CD8-positive, alpha-beta T cell (primary cell): ENCODE measurements at regions of chr6 and their contacts with region 1.

Region 1: DNA sequence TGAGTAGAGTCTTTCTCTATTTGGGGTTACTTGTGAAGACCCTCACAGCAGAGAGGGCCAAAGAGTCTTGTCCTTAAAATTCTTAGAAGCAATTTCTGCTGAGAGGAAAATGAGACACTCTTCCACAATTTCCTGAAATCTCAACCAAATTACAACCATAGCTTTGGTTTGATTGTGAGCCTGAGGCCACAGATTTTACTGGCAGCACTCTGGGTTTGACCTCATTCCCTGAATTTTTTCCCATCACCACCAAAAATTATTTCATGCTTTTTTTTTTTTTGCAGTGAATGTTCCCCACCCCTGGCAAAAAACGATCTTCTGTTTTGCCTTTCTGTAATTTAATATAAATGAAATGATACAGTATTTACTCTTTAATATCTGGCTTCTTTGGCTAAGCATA is 125.5 kb downstream of the THEMIS start:
- DNase-seq: no peak
- ATAC-seq: no peak
- H3K4me3 ChIP-seq: no peak overlapping the region
- H3K4me3 Mint-ChIP-seq: no peak overlapping the region
- H3K27ac ChIP-seq: no peak overlapping the region
- H3K27ac Mint-ChIP-seq: peak overlapping the region; percentile 76
- H3K4me1 ChIP-seq: peaks cover 10% of the 10 kb centered on the region
- H3K4me1 Mint-ChIP-seq: peaks cover 72% of the 10 kb centered on the region
- H3K27me3 ChIP-seq: no peaks in the 10 kb centered on the region
- H3K27me3 Mint-ChIP-seq: no peaks in the 10 kb centered on the region
- CTCF ChIP-seq: no peak

Region 2: GRCh38 chr6:127762284-127762683 is 13.1 kb before region 1 on chr6:
- CTCF ChIA-PET with region 1: interaction called, 4 read pairs
- POLR2A ChIA-PET with region 1: no interaction called
- intact Hi-C with region 1: loop called in 1 of 2 experiments (anchors 2 kb)
- DNase-seq: peak in 3 of 9 experiments; percentile 15 to 38 (median 18)
- ATAC-seq: peak; percentile 38
- H3K4me3 ChIP-seq: no peak overlapping the region
- H3K4me3 Mint-ChIP-seq: no peak overlapping the region
- H3K27ac ChIP-seq: peak overlapping the region in 1 of 2 experiments; percentile 10
- H3K27ac Mint-ChIP-seq: peak overlapping the region; percentile 75
- H3K4me1 ChIP-seq: peaks cover 38% of the 10 kb centered on the region
- H3K4me1 Mint-ChIP-seq: peaks cover 62% of the 10 kb centered on the region
- H3K27me3 ChIP-seq: no peaks in the 10 kb centered on the region
- H3K27me3 Mint-ChIP-seq: no peaks in the 10 kb centered on the region
- CTCF ChIP-seq: no peak

Region 3: GRCh38 chr6:127792616-127793015 is 17.2 kb after region 1 on chr6:
- CTCF ChIA-PET with region 1: interaction called, 4 read pairs
- POLR2A ChIA-PET with region 1: no interaction called
- intact Hi-C with region 1: loop called in 1 of 2 experiments (anchors 2 kb)
- DNase-seq: peak in 2 of 9 experiments; percentile 41 to 64
- ATAC-seq: peak; percentile 87
- H3K4me3 ChIP-seq: no peak overlapping the region
- H3K4me3 Mint-ChIP-seq: peak overlapping the region; percentile 48
- H3K27ac ChIP-seq: no peak overlapping the region
- H3K27ac Mint-ChIP-seq: peak overlapping the region; percentile 87
- H3K4me1 ChIP-seq: peaks cover 84% of the 10 kb centered on the region
- H3K4me1 Mint-ChIP-seq: peaks cover 90% of the 10 kb centered on the region
- H3K27me3 ChIP-seq: no peaks in the 10 kb centered on the region
- H3K27me3 Mint-ChIP-seq: no peaks in the 10 kb centered on the region
- CTCF ChIP-seq: no peak